PC-3 (cell line): ENCODE measurements at regions of chr1 and their contacts with region 1.

Region 1: GRCh38 chr1:221478050-221478949 is 263.6 kb downstream of the DUSP10 start:
- DNase-seq: peak; percentile 94
- ATAC-seq: peak; percentile 100
- H3K4me3 ChIP-seq: no peak overlapping the region
- H3K27ac ChIP-seq: peak overlapping the region; percentile 53
- H3K4me1 ChIP-seq: peaks cover 20% of the 10 kb centered on the region
- H3K27me3 ChIP-seq: no peaks in the 10 kb centered on the region
- CTCF ChIP-seq: peak; percentile 98

Region 2: DNA sequence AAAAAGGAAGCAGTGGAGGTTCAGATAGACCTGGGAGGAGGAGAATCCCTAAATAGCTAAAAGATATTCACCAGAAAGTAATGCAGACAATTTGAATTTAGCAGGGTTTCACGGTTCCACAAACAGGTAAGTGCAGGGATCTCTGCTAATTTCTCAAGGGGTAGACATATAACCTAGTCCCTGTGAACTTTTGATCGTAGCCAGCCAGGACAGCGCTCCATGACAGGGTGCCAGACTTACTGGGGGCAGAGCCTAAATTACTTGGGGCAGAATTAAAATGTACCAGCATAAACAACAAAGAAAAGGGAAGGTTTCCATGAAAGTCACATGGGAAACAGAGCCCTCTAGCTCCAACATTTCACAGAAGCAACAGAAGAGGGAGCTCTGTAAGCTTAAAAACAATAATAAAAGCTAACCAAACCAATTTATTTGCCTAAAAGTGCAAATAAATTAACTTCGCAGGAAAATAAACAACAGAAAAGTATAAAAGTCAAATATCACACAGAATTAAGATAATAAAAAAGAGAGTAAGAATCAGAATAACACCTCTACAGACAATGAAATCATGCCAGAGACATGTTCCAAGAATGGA is 65.3 kb after region 1 on chr1:
- CTCF ChIA-PET with region 1: interaction called, 4 read pairs
- POLR2A ChIA-PET with region 1: interaction called, 5 read pairs
- intact Hi-C with region 1: loop called (anchors 2 kb)
- DNase-seq: peak; percentile 60
- ATAC-seq: peak; percentile 48; the same call in 1 of the 2 replicates
- H3K4me3 ChIP-seq: no peak overlapping the region
- H3K27ac ChIP-seq: no peak overlapping the region
- H3K4me1 ChIP-seq: peaks cover 5% of the 10 kb centered on the region; the same call in 1 of the 2 replicates
- H3K27me3 ChIP-seq: no peaks in the 10 kb centered on the region
- CTCF ChIP-seq: peak; percentile 87

Region 3: DNA sequence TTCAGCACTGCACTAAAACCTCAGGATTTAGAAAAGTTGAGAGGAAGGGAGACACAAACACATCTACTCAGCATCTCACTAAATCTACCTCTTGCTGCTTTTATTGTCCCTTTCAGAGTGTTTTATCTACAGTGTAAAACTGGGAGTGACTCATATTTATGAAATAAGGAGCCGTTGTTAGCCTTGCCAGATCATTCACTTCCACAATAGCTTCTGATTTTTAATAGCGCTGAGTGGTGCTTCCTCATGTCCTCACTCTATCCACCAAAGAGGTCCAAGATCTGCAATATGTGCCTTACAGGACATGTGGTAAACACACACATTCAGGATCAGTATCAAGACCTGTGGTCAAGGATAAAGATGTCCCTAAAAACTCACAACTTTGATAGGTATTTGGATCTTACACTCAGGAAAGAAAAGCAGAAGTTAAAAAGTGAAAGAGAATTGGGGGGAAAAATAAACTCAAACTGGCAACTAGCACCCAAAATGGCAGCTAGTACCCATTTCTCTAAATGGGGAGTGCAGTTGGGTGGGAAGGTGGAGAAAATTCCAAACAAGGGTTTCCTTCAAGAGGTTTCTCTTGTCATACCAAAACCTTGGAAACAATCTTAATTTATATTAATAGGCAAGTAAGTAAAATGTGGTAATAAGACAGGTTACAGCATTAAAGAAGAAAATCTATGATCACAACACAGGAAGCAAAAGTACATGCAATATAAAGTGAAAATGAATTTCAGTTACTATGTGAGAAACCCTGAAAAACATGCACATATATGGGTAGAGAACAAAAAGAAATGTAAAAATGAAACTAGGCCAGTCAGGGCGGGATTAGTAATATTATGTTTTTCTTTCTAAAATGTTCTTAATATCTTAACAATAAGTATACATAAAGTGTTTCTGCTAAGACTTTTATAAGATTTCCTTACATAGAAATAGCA is 247.7 kb after region 1 on chr1:
- CTCF ChIA-PET with region 1: no interaction called
- POLR2A ChIA-PET with region 1: no interaction called
- intact Hi-C with region 1: loop called (anchors 5 kb)
- DNase-seq: peak; percentile 82
- ATAC-seq: peak; percentile 94
- H3K4me3 ChIP-seq: no peak overlapping the region
- H3K27ac ChIP-seq: peak overlapping the region; percentile 14
- H3K4me1 ChIP-seq: peaks cover 19% of the 10 kb centered on the region
- H3K27me3 ChIP-seq: no peaks in the 10 kb centered on the region
- CTCF ChIP-seq: no peak

Region 4: DNA sequence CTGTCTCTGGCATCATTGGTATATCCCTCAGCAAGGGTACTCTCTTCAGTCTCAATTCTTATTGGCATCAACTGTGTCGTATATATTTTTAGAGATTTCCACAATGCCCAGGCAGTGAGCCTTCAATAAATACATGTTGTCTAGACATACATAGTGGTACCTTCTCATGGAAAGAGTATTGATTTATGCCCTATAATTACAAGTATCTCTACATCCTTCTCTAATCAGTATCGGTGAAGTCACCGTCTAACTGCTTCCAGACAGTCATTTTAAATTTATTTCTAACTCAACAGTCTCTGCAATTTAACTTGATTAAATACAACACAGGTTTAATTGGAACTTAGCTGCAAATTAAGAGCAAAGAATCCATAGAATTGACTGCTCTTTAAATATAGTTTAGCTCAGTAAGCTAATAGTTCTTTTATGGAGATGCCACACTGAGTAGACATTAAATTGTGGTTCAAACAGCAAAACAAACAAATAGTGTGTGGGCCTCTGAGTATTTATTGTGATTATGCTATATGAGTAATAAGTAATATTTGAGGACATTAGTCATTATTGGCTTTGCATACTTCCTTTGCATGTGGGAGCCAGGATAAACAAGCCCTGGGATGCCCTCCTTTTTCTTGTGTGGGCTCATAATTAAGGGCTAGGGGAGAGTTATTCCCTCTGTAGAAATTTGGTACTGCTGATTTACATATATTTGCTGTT is 390.4 kb after region 1 on chr1:
- CTCF ChIA-PET with region 1: no interaction called
- POLR2A ChIA-PET with region 1: no interaction called
- intact Hi-C with region 1: loop called (anchors 1 kb)
- DNase-seq: peak; percentile 93
- ATAC-seq: peak; percentile 93
- H3K4me3 ChIP-seq: peak overlapping the region; percentile 19; the same call in 1 of the 2 replicates
- H3K27ac ChIP-seq: peak overlapping the region; percentile 61
- H3K4me1 ChIP-seq: peaks cover 23% of the 10 kb centered on the region
- H3K27me3 ChIP-seq: no peaks in the 10 kb centered on the region
- CTCF ChIP-seq: no peak

Region 5: GRCh38 chr1:222009105-222009730 is 530.9 kb after region 1 on chr1:
- CTCF ChIA-PET with region 1: interaction called, 7 read pairs
- POLR2A ChIA-PET with region 1: no interaction called
- intact Hi-C with region 1: loop called (anchors 1 kb)
- DNase-seq: peak; percentile 78
- ATAC-seq: peak; percentile 88
- H3K4me3 ChIP-seq: no peak overlapping the region
- H3K27ac ChIP-seq: no peak overlapping the region
- H3K4me1 ChIP-seq: peaks cover 12% of the 10 kb centered on the region; the same call in 1 of the 2 replicates
- H3K27me3 ChIP-seq: no peaks in the 10 kb centered on the region
- CTCF ChIP-seq: peak; percentile 94

Region 6: GRCh38 chr1:222095606-222096475 is 617.5 kb after region 1 on chr1:
- CTCF ChIA-PET with region 1: interaction called, 4 read pairs
- POLR2A ChIA-PET with region 1: no interaction called
- intact Hi-C with region 1: loop called (anchors 2 kb)
- DNase-seq: peak; percentile 77
- ATAC-seq: peak; percentile 71
- H3K4me3 ChIP-seq: no peak overlapping the region
- H3K27ac ChIP-seq: no peak overlapping the region
- H3K4me1 ChIP-seq: peaks cover 5% of the 10 kb centered on the region; the same call in 1 of the 2 replicates
- H3K27me3 ChIP-seq: no peaks in the 10 kb centered on the region
- CTCF ChIP-seq: peak; percentile 98

Region 7: GRCh38 chr1:222171005-222171404 is 692.7 kb after region 1 on chr1:
- CTCF ChIA-PET with region 1: interaction called, 7 read pairs
- POLR2A ChIA-PET with region 1: no interaction called
- intact Hi-C with region 1: loop called (anchors 1 kb)
- DNase-seq: peak; percentile 77
- ATAC-seq: peak; percentile 71
- H3K4me3 ChIP-seq: no peak overlapping the region
- H3K27ac ChIP-seq: no peak overlapping the region
- H3K4me1 ChIP-seq: no peaks in the 10 kb centered on the region
- H3K27me3 ChIP-seq: no peaks in the 10 kb centered on the region
- CTCF ChIP-seq: peak; percentile 90